Activated CD4-positive, alpha-beta T cell treated with anti-CD3 and anti-CD28 coated beads for 36 hours (primary cell): ENCODE measurements at regions of chr18 and their contacts with region 1.

Region 1: DNA sequence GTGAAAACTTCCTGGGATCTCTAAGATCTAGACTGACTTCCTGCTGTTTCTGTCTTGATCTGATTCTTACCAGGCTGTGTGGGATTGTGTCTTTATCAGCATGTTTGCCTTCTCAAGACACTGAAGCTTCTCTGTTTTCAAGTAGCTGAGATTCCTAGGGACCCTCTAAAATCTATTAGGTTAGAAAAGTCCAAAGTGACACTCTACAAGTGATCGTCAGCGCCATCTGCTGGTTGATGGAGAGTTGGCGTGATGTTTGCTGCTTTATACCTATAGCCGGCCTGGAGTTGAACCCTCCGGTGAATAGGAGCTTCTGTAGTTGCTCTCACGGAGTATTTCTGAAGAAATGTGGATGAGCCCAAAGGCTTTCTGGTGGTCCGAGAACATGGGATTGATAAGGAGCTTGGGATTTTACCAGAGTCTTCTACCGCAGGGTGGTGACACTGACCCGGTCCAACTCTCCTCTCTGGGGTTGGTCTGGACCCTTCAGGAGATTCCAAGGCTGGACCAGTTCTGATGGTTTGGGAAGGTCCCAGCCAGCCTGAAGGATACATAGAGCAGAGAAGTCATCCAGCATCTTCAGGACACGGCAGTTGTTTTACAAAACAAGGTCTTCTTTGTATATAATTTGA is 96.0 kb upstream of the TTC39C start:
- DNase-seq: peak; percentile 89
- ATAC-seq: peak; percentile 88
- H3K4me3 Mint-ChIP-seq: no peak overlapping the region
- H3K27ac Mint-ChIP-seq: no peak overlapping the region
- H3K4me1 Mint-ChIP-seq: peaks cover 12% of the 10 kb centered on the region
- H3K27me3 Mint-ChIP-seq: peaks cover 2% of the 10 kb centered on the region

Region 2: DNA sequence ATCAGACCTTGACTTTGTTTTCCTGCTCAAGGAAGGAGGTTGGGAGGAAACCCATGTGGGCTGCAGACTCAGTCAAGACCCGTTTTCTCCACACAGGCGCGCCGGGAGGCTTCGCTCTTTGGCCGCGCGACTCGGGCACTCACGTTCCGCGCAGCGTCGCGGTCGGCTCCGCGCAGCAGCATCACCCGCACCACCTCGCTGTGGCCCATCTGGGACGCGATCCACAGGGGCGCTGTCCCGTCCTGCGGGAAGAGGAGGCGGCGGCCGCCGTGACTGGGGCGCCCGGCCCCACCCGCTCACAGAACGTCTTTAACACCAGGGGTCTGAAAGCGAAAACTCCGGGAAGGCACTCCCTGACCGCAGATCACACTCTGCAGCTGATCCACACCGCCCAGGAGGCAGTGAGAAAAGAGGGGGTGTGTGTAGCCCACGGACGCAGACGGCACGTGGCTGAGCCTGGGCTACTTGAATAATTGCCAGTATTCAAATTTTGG is 299.1 kb before region 1 on chr18:
- CTCF ChIA-PET with region 1: no interaction called
- POLR2A ChIA-PET with region 1: no interaction called
- intact Hi-C with region 1: loop called (anchors 1 to 10 kb)
- DNase-seq: peak; percentile 29
- ATAC-seq: peak; percentile 42
- H3K4me3 Mint-ChIP-seq: peak overlapping the region; percentile 36
- H3K27ac Mint-ChIP-seq: no peak overlapping the region
- H3K4me1 Mint-ChIP-seq: peaks cover 2% of the 10 kb centered on the region
- H3K27me3 Mint-ChIP-seq: peaks cover 38% of the 10 kb centered on the region

Region 3: DNA sequence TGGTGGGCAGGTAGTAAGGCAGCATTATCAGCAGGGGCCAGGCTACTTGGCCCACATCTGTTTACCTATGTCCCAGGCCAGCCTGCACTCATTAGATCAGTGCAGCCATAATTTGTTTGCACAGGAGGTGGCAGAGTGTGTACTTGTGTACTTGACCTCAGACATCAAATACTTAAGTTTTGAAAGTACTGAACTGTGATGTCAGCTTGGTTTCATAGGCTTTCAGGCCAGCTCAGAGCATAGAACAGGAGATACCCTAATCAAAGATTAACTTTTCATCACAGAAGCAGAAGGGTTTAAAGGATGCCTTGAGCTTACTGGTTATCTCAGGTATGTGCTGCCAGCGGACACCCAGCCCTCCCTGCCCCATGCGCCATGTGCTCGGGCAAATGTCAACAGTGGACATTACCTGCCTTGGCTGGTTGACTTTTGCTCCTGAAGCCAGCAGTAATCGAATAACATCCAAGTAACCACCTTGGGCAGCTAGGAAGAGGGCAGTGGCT is 289.0 kb before region 1 on chr18:
- CTCF ChIA-PET with region 1: interaction called, 3 read pairs
- POLR2A ChIA-PET with region 1: no interaction called
- intact Hi-C with region 1: loop called in 1 of 2 experiments (anchors 10 kb)
- DNase-seq: no peak
- ATAC-seq: no peak
- H3K4me3 Mint-ChIP-seq: no peak overlapping the region
- H3K27ac Mint-ChIP-seq: no peak overlapping the region
- H3K4me1 Mint-ChIP-seq: peaks cover 9% of the 10 kb centered on the region
- H3K27me3 Mint-ChIP-seq: peaks cover 2% of the 10 kb centered on the region

Region 4: DNA sequence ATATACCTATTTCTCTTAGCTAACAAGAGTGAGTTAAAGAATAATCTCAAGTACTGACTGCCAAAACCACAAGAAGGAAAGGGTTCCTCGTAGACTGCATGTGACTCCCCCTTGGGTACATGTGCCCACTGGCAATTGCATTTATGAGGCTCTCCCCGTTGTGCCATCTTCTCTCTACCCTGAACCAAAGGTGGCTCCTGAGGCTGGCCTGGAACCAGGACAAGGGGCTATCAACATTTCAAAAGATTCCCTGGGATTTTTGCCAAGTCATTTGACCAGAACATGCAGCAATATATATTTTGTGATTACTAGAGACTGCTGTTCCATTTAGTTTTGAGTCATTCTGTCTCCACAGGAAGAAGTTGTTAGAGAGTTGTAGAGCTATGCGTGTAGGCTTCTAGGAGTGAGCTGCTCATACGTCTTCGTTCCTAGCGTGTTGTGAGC is 183.5 kb before region 1 on chr18:
- CTCF ChIA-PET with region 1: no interaction called
- POLR2A ChIA-PET with region 1: no interaction called
- intact Hi-C with region 1: loop called in 1 of 2 experiments (anchors 10 kb)
- DNase-seq: no peak
- ATAC-seq: peak; percentile 65
- H3K4me3 Mint-ChIP-seq: no peak overlapping the region
- H3K27ac Mint-ChIP-seq: no peak overlapping the region
- H3K4me1 Mint-ChIP-seq: peaks cover 34% of the 10 kb centered on the region
- H3K27me3 Mint-ChIP-seq: peaks cover 5% of the 10 kb centered on the region

Region 5: DNA sequence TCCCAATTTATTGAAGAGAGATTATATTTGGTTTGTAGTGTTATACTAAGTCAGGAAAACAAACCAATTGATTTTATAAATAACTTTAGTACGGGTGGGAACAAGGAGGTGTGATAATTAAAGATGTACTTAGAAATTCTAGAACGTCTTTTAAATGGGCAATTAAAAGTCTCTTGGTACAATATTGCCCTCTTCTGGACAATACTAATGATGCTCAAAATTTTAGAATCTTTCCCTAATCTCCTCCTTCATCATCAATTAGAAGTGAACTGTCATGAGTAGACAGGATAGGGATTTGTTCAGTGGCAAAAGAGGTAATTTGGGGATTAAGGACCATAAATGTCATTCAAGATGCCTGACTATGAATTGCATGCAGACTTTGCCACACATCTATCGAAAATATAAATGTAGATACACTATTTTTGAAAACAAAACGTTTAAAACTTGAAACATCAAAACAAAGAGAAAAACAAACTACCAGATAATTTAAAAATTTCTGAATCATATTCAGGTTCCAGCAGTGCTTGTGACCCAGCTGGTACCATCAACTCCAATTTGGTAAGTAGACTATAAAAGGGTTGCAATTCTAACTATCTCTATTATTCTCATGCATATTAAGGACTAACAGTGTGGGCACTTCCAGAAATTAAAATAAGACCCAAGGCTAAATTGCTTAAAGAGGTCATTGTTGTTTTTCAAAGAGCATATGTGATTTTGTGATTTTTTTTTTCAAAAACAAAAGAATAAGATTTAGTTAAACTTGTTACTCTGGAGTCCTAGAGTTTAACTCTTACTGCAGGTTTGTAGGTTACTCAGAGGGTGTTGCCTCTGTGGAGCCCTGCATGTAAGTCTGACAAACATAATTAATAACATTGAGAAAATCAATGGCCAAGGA is 105.7 kb before region 1 on chr18:
- CTCF ChIA-PET with region 1: interaction called, 6 read pairs
- POLR2A ChIA-PET with region 1: no interaction called
- intact Hi-C with region 1: loop called in 1 of 2 experiments (anchors 5 kb)
- DNase-seq: no peak
- ATAC-seq: no peak
- H3K4me3 Mint-ChIP-seq: no peak overlapping the region
- H3K27ac Mint-ChIP-seq: no peak overlapping the region
- H3K4me1 Mint-ChIP-seq: peaks cover 13% of the 10 kb centered on the region
- H3K27me3 Mint-ChIP-seq: peaks cover 2% of the 10 kb centered on the region

Region 6: DNA sequence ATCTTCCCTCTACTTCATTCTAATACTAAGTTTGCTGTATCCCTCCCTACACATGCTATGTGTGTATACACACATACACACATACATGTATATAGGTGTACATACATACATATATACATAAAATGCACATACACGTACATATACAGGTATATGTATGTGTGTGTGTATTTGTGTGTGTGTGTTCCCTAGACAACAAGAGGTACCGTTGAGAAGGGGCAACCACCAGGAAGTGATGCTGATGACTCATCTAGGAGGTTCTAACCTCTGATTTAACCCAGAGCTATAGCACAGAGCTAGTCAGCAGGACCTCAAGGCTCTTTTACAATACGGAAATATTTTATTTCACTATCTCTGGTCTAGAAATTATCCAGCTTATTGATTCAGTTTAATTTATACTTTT is 90.1 kb before region 1 on chr18:
- CTCF ChIA-PET with region 1: interaction called, 4 read pairs
- POLR2A ChIA-PET with region 1: no interaction called
- intact Hi-C with region 1: loop called (anchors 2 to 5 kb)
- DNase-seq: peak; percentile 48
- ATAC-seq: peak; percentile 94
- H3K4me3 Mint-ChIP-seq: no peak overlapping the region
- H3K27ac Mint-ChIP-seq: no peak overlapping the region
- H3K4me1 Mint-ChIP-seq: peaks cover 46% of the 10 kb centered on the region
- H3K27me3 Mint-ChIP-seq: no peaks in the 10 kb centered on the region

Region 7: GRCh38 chr18:24502644-24503523 is 584.4 kb after region 1 on chr18:
- CTCF ChIA-PET with region 1: no interaction called
- POLR2A ChIA-PET with region 1: no interaction called
- intact Hi-C with region 1: no loop called
- DNase-seq: no peak
- ATAC-seq: no peak
- H3K4me3 Mint-ChIP-seq: no peak overlapping the region
- H3K27ac Mint-ChIP-seq: no peak overlapping the region
- H3K4me1 Mint-ChIP-seq: no peaks in the 10 kb centered on the region
- H3K27me3 Mint-ChIP-seq: peaks cover 2% of the 10 kb centered on the region